Right ventricle myocardium inferior (tissue), 1 donor: ENCODE measurements at regions of chr12 and their contacts with region 1.

Region 1: DNA sequence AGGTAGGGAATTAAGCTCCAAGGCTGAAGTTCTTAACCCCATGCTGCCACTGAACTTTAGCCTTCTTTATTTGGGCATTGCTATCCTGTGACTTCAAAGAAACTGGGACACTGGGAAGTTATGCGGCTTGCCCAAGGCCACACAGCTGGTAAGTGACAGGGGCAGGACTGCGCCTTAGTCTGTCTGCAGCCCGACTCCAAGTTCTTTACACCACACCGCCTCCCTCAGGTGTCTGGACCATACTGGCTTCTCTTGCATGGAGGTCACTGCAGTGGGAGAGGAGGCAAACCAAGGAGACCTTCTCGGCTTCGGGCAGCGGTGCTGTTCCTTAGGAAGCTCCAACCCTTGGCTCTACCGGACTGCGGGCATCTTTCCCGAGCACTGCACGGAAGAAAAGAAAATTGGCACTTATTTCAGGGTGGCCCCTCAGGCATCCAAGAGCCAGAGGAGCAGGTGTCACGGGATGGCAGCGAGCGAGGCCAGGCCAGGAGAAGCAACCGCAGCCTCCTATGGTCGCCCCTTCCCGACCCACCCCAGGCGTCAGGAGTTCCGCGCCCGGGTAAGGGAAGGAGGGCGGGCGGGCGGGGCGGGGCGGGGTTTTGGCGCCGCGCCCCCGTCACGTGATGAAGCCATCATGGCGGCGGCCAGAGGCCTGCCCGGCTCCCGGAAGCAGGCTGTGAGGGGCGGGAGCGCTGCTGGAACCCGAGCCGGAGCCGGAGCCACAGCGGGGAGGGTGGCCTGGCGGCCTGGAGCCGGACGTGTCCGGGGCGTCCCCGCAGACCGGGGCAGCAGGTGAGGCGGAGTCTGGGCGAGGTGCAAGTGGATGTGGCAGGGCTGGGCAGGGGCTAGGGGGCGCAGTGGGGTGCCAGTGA is 16.4 kb upstream of the ESPL1 start:
- DNase-seq: peak; percentile 89
- ATAC-seq: peak; percentile 94

Region 2: GRCh38 chr12:53213348-53213747 is 38.4 kb before region 1 on chr12:
- intact Hi-C with region 1: loop called (anchors 2 kb)
- DNase-seq: peak; percentile 93
- ATAC-seq: peak; percentile 75

Region 3: GRCh38 chr12:53220801-53221202 is 30.9 kb before region 1 on chr12:
- intact Hi-C with region 1: loop called (anchors 2 kb)
- DNase-seq: peak; percentile 97
- ATAC-seq: peak; percentile 92

Region 4: DNA sequence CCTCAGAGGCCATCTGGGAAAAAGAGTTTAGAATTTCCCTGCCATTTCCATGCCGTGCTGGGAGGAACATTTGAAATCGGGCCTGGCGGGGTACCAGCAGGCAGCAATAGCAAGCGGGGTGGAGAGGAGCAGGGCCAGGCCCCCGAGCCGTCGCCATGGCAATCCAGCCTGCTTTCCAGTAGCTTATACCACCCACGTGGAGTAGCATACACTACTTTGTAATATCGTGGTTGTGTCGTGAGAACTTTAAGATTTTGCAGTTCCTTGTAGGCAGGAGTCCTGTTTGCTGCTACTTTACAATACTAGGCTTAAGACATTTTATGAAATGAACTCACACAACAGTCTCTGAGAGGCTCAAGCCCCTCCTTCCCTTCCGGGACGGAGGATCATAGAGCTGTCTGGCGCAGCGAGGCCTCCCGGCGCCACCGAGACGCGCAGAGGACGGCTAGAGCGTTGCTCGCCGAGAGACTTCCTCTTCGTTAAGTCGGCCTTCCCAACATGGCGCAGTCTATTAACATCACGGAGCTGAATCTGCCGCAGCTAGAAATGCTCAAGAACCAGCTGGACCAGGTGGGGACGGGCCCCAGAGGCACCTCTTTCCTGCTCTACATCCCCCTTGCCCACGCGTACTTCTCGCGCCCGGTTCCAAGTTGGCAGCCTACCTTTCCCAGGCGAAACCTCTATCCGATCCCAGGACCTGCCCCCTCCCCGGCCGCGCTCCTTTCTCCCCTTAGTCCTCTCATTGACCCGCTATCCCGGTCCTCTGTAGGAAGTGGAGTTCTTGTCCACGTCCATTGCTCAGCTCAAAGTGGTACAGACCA is 43.6 kb after region 1 on chr12 and contains the start of gene PFDN5:
- intact Hi-C with region 1: loop called (anchors 5 kb)
- DNase-seq: peak; percentile 94
- ATAC-seq: peak; percentile 95
- total RNA-seq, gene PFDN5: 392 TPM